ENCODE measurements at regions of chr6 and their contacts with region 1.

Region 1: DNA sequence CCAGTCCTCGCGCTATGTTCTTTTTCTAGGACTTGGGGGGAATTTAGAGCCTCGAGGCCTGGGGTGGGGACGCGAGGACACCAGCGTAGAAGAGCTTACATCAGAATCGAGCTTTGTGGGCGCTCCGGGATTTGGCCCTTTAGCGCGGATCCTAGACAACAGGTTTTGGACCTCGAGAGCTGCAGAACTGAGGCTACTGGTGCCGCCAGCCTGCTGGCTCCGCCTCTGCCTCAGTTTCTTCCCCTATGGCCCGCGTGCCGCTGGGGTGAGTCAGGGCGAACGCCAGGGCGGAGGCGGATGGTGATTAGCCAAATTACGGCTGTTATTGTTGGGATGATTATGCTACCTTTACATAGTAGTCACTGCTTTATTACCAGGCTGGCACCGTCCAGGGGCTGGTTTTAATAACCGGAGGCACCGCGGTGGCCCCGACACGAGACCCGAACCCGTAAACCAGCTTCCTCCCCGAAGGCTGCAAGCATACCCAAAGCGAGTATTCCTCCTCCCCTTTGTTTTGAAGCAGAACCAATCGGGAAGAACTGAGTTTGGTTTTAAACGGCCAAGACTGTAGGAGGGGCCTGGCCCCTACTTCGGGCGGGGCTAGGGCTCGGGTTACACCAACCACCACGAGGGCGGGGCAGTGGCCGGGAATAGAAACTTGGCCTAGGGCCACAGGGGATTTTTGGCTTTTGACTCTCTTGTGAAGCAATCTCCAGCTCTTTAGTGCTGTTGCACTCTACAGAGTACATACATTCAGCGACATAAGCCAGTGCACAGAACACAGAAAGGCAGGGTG is 639 bp upstream of the GTPBP2 start:
- DNase-seq: peak; percentile 66 to 96 (median 84)
- ATAC-seq: peak; percentile 51
- H3K4me3 ChIP-seq: peak overlapping the region; percentile 77 to 82
- H3K4me3 Mint-ChIP-seq: peak overlapping the region; percentile 98
- H3K27ac ChIP-seq: peak overlapping the region; percentile 53 to 75
- H3K27ac Mint-ChIP-seq: peak overlapping the region; percentile 95
- H3K4me1 ChIP-seq: peaks cover 15% of the 10 kb centered on the region
- H3K4me1 Mint-ChIP-seq: peaks cover 39% of the 10 kb centered on the region
- H3K27me3 ChIP-seq: no peaks in the 10 kb centered on the region
- H3K27me3 Mint-ChIP-seq: no peaks in the 10 kb centered on the region
- CTCF ChIP-seq: no peak

Region 2: GRCh38 chr6:43369174-43370022 is 260.3 kb before region 1 on chr6 and contains the start of gene ZNF318:
- CTCF ChIA-PET with region 1: no interaction called
- POLR2A ChIA-PET with region 1: no interaction called
- intact Hi-C with region 1: loop called in 1 of 2 experiments (anchors 1 kb)
- DNase-seq: peak; percentile 85 to 98 (median 93)
- ATAC-seq: peak; percentile 95
- H3K4me3 ChIP-seq: peak within 1 kb of the TSS; percentile 69 to 81
- H3K4me3 Mint-ChIP-seq: peak within 1 kb of the TSS; percentile 89
- H3K27ac ChIP-seq: peak within 1 kb of the TSS; percentile 76 to 87
- H3K27ac Mint-ChIP-seq: peak within 1 kb of the TSS; percentile 96
- H3K4me1 ChIP-seq: peaks cover 33% of the 10 kb centered on the region
- H3K4me1 Mint-ChIP-seq: peaks cover 43% of the 10 kb centered on the region
- H3K27me3 ChIP-seq: no peaks in the 10 kb centered on the region
- H3K27me3 Mint-ChIP-seq: no peaks in the 10 kb centered on the region
- CTCF ChIP-seq: no peak
- total RNA-seq, gene ZNF318: 18.2 TPM

Region 3: GRCh38 chr6:43575772-43576551 is 53.7 kb before region 1 on chr6 and contains the starts of genes POLH and XPO5:
- CTCF ChIA-PET with region 1: no interaction called
- POLR2A ChIA-PET with region 1: interaction called, 7 read pairs
- intact Hi-C with region 1: loop called (anchors 1 to 2 kb)
- DNase-seq: peak; percentile 80 to 97 (median 90)
- ATAC-seq: peak; percentile 96
- H3K4me3 ChIP-seq: peak within 1 kb of the TSS; percentile 78 to 89
- H3K4me3 Mint-ChIP-seq: peak within 1 kb of the TSS; percentile 95
- H3K27ac ChIP-seq: peak within 1 kb of the TSS; percentile 55 to 66
- H3K27ac Mint-ChIP-seq: peak within 1 kb of the TSS; percentile 93
- H3K4me1 ChIP-seq: peaks cover 20% of the 10 kb centered on the region
- H3K4me1 Mint-ChIP-seq: peaks cover 36% of the 10 kb centered on the region
- H3K27me3 ChIP-seq: no peaks in the 10 kb centered on the region
- H3K27me3 Mint-ChIP-seq: no peaks in the 10 kb centered on the region
- CTCF ChIP-seq: no peak
- total RNA-seq, gene POLH: 3.4 to 3.7 TPM
- total RNA-seq, gene XPO5: 29.6 to 39.9 TPM

Region 4: GRCh38 chr6:43687437-43688347 is 58.0 kb after region 1 on chr6 and contains the start of gene MRPS18A:
- CTCF ChIA-PET with region 1: no interaction called
- POLR2A ChIA-PET with region 1: no interaction called
- intact Hi-C with region 1: loop called in 1 of 2 experiments (anchors 5 kb)
- DNase-seq: peak; percentile 47 to 86 (median 77)
- ATAC-seq: peak; percentile 94
- H3K4me3 ChIP-seq: peak within 1 kb of the TSS; percentile 94 to 97
- H3K4me3 Mint-ChIP-seq: peak within 1 kb of the TSS; percentile 95
- H3K27ac ChIP-seq: peak within 1 kb of the TSS; percentile 68 to 72
- H3K27ac Mint-ChIP-seq: peak within 1 kb of the TSS; percentile 88
- H3K4me1 ChIP-seq: peaks cover 25% of the 10 kb centered on the region
- H3K4me1 Mint-ChIP-seq: peaks cover 49% of the 10 kb centered on the region
- H3K27me3 ChIP-seq: no peaks in the 10 kb centered on the region
- H3K27me3 Mint-ChIP-seq: no peaks in the 10 kb centered on the region
- CTCF ChIP-seq: no peak
- total RNA-seq, gene MRPS18A: 43.9 to 44.6 TPM

Region 5: GRCh38 chr6:44246663-44247337 is 617.1 kb after region 1 on chr6 and contains the start of gene HSP90AB1:
- CTCF ChIA-PET with region 1: no interaction called
- POLR2A ChIA-PET with region 1: interaction called, 6 read pairs
- intact Hi-C with region 1: loop called in 1 of 2 experiments (anchors 2 kb)
- DNase-seq: peak; percentile 89 to 99 (median 94)
- ATAC-seq: peak; percentile 79
- H3K4me3 ChIP-seq: peak within 1 kb of the TSS; percentile 96 to 98
- H3K4me3 Mint-ChIP-seq: peak within 1 kb of the TSS; percentile 99
- H3K27ac ChIP-seq: peak within 1 kb of the TSS; percentile 95 to 96
- H3K27ac Mint-ChIP-seq: peak within 1 kb of the TSS; percentile 98
- H3K4me1 ChIP-seq: peaks cover 26% of the 10 kb centered on the region
- H3K4me1 Mint-ChIP-seq: peaks cover 50% of the 10 kb centered on the region
- H3K27me3 ChIP-seq: no peaks in the 10 kb centered on the region
- H3K27me3 Mint-ChIP-seq: no peaks in the 10 kb centered on the region
- CTCF ChIP-seq: no peak
- total RNA-seq, gene HSP90AB1: 561 to 585 TPM

Measured in CD8-positive, alpha-beta T cell (primary cell).